ENCODE measurements at regions of chr15 and their contacts with region 1.

Region 1: DNA sequence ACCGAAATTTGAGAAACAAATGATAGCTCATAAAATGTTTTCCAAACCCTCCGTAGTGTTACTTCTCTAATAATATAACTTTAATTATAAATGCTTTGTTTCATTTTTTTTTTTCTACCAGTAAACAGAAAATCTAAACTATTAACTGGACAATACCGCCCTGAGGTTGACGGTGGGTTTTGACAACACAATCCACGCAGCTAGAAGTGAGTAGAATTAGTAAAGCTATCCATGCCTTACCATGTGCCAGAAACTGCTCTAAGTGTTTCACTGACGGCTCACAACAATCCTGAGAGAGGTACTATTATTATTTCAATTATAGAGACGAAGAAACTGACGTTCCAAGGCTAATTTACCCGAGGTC is 410 bp downstream of the NDUFAF1 start:
- DNase-seq: peak in 1 of 14 experiments; percentile 9
- ATAC-seq: no peak
- H3K4me3 ChIP-seq: peak overlapping the region; percentile 93
- H3K4me3 Mint-ChIP-seq: peak overlapping the region; percentile 98
- H3K27ac ChIP-seq: peak overlapping the region; percentile 66 to 83
- H3K27ac Mint-ChIP-seq: peak overlapping the region; percentile 97
- H3K4me1 ChIP-seq: peaks cover 15% of the 10 kb centered on the region
- H3K4me1 Mint-ChIP-seq: peaks cover 21% of the 10 kb centered on the region
- H3K27me3 ChIP-seq: no peaks in the 10 kb centered on the region
- H3K27me3 Mint-ChIP-seq: no peaks in the 10 kb centered on the region
- CTCF ChIP-seq: no peak

Region 2: DNA sequence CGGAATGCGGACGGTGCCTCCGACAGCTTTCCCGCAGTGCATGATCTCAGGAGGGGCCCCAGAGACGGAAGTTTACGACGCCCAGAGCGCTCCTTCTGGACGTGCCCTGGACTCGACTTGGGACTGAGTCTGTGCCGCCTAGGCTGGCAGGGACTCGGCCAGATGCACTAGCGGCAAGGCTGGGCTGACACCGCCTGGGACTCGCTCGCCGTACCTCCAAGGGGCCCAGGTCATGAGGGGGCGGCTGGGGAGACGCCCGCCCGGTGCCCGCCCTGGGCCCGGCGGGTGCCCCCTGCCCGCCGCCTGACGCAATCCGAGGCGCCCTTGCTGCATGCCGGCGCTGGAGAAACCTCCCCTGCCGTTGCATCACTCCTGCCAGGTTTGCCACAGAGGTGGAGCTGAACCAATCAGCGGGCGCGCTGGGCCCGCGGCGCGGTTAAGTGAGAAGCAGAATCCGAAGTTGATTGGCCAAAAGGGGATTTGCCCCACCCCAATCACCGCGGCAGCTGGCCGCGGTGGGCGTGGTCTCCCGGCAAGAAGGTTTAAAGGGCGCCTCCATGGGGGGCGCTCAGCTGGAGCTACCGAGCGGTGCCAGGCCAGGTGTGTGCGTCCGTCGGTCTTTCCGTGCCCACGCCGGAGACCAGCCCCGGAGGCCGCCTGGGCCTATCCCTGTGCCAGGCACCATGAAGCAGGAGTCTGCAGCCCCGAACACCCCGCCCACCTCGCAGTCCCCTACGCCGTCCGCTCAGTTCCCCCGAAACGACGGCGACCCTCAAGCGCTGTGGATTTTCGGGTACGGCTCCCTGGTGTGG is 448.8 kb before region 1 on chr15 and contains the start of gene CHAC1:
- CTCF ChIA-PET with region 1: no interaction called
- POLR2A ChIA-PET with region 1: no interaction called
- intact Hi-C with region 1: loop called in 1 of 2 experiments (anchors 10 kb)
- DNase-seq: peak; percentile 87 to 98 (median 93)
- ATAC-seq: peak; percentile 96
- H3K4me3 ChIP-seq: peak within 1 kb of the TSS; percentile 81
- H3K4me3 Mint-ChIP-seq: peak within 1 kb of the TSS; percentile 96
- H3K27ac ChIP-seq: no peak within 1 kb of the TSS
- H3K27ac Mint-ChIP-seq: peak within 1 kb of the TSS; percentile 82
- H3K4me1 ChIP-seq: peaks cover 18% of the 10 kb centered on the region
- H3K4me1 Mint-ChIP-seq: peaks cover 10% of the 10 kb centered on the region
- H3K27me3 ChIP-seq: peaks cover 0 to 4% of the 10 kb centered on the region in 2 experiments
- H3K27me3 Mint-ChIP-seq: no peaks in the 10 kb centered on the region
- CTCF ChIP-seq: peak; percentile 20
- total RNA-seq, gene CHAC1: 0.42 to 0.47 TPM

Region 3: GRCh38 chr15:41230650-41231533 is 171.0 kb before region 1 on chr15 and contains the starts of genes CHP1 and EXD1:
- CTCF ChIA-PET with region 1: interaction called, 4 read pairs
- POLR2A ChIA-PET with region 1: no interaction called
- intact Hi-C with region 1: loop called in 1 of 2 experiments (anchors 5 kb)
- DNase-seq: peak; percentile 87 to 97 (median 93)
- ATAC-seq: peak; percentile 93
- H3K4me3 ChIP-seq: peak within 1 kb of the TSS; percentile 88
- H3K4me3 Mint-ChIP-seq: peak within 1 kb of the TSS; percentile 93
- H3K27ac ChIP-seq: peak within 1 kb of the TSS; percentile 54 to 64
- H3K27ac Mint-ChIP-seq: peak within 1 kb of the TSS; percentile 88
- H3K4me1 ChIP-seq: peaks cover 20% of the 10 kb centered on the region
- H3K4me1 Mint-ChIP-seq: peaks cover 40% of the 10 kb centered on the region
- H3K27me3 ChIP-seq: no peaks in the 10 kb centered on the region
- H3K27me3 Mint-ChIP-seq: no peaks in the 10 kb centered on the region
- CTCF ChIP-seq: peak; percentile 98
- total RNA-seq, gene CHP1: 20.7 to 25.5 TPM
- total RNA-seq, gene EXD1: not detected

Region 4: GRCh38 chr15:41331833-41332787 is 69.8 kb before region 1 on chr15 and contains the start of gene OIP5:
- CTCF ChIA-PET with region 1: interaction called, 3 read pairs
- POLR2A ChIA-PET with region 1: interaction called, 7 read pairs
- intact Hi-C with region 1: loop called in 1 of 2 experiments (anchors 5 kb)
- DNase-seq: peak; percentile 94 to 99 (median 97)
- ATAC-seq: peak; percentile 96
- H3K4me3 ChIP-seq: peak within 1 kb of the TSS; percentile 77
- H3K4me3 Mint-ChIP-seq: peak within 1 kb of the TSS; percentile 95
- H3K27ac ChIP-seq: peak within 1 kb of the TSS in 1 of 2 donors; percentile 38
- H3K27ac Mint-ChIP-seq: peak within 1 kb of the TSS; percentile 78
- H3K4me1 ChIP-seq: peaks cover 21% of the 10 kb centered on the region
- H3K4me1 Mint-ChIP-seq: peaks cover 19% of the 10 kb centered on the region
- H3K27me3 ChIP-seq: no peaks in the 10 kb centered on the region
- H3K27me3 Mint-ChIP-seq: no peaks in the 10 kb centered on the region
- CTCF ChIP-seq: peak; percentile 58
- total RNA-seq, gene OIP5: 0.20 to 0.36 TPM

Region 5: GRCh38 chr15:41544650-41545015 is 142.7 kb after region 1 on chr15:
- CTCF ChIA-PET with region 1: no interaction called
- POLR2A ChIA-PET with region 1: interaction called, 3 read pairs
- intact Hi-C with region 1: loop called in 1 of 2 experiments (anchors 5 kb)
- DNase-seq: peak in 3 of 14 experiments; percentile 23 to 50 (median 44)
- ATAC-seq: no peak
- H3K4me3 ChIP-seq: peak overlapping the region; percentile 98
- H3K4me3 Mint-ChIP-seq: peak overlapping the region; percentile 98
- H3K27ac ChIP-seq: no peak overlapping the region
- H3K27ac Mint-ChIP-seq: peak overlapping the region; percentile 85
- H3K4me1 ChIP-seq: peaks cover 16% of the 10 kb centered on the region
- H3K4me1 Mint-ChIP-seq: peaks cover 29% of the 10 kb centered on the region
- H3K27me3 ChIP-seq: no peaks in the 10 kb centered on the region
- H3K27me3 Mint-ChIP-seq: no peaks in the 10 kb centered on the region
- CTCF ChIP-seq: no peak

Region 6: DNA sequence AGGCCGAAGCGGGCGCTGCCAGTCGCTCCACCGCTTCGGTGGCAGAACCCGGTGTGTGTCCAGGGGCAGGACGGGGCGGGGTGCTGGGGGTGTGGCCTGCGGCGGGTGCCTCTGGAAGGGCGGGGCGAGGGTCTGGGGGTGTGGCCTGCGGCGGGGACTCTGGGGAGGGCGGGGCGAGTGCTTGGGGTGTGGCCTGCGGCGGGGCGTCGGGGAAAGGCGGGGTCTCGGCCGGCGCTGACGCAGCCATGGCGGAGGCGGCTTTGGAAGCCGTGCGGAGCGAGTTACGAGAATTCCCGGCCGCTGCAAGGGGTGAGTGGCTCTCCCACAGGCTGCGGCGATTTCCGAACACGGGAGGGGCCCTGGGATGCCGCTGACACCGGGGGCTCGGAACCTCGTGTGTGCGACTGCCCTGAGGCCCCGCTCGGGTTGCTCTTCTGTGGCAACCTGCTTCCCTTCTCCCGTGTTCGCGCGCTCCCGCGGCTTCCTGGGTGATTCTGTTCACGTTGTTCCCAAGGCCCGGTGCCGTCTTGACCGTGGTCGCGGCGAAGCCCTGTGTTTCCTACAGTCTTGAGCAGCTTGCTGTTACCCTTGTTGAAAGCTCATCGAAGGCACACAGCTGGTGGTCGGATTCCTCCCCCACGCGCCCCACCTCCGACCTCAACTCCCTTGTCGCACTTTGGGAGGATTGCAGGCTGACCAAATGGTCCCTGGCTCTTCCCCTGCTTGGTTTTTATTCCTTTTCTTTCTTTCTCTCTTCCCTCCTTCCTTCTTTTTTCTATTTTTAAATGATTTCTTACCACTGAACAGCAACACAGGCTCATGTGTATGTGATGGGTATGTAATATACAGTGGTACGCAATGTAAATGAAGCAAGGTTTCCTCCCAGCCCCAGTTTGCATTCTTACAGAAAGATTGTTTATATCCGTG is 426.3 kb after region 1 on chr15 and contains the start of gene JMJD7:
- CTCF ChIA-PET with region 1: no interaction called
- POLR2A ChIA-PET with region 1: no interaction called
- intact Hi-C with region 1: loop called in 1 of 2 experiments (anchors 5 kb)
- DNase-seq: peak; percentile 92 to 99 (median 96)
- ATAC-seq: peak; percentile 94
- H3K4me3 ChIP-seq: peak within 1 kb of the TSS; percentile 92
- H3K4me3 Mint-ChIP-seq: peak within 1 kb of the TSS; percentile 90
- H3K27ac ChIP-seq: peak within 1 kb of the TSS; percentile 53 to 64
- H3K27ac Mint-ChIP-seq: peak within 1 kb of the TSS; percentile 87
- H3K4me1 ChIP-seq: peaks cover 52% of the 10 kb centered on the region
- H3K4me1 Mint-ChIP-seq: peaks cover 30% of the 10 kb centered on the region
- H3K27me3 ChIP-seq: no peaks in the 10 kb centered on the region
- H3K27me3 Mint-ChIP-seq: no peaks in the 10 kb centered on the region
- CTCF ChIP-seq: no peak
- total RNA-seq, gene JMJD7: 35.6 to 38.4 TPM